ENCODE measurements at regions of chr4 and their contacts with region 1.

Region 1: GRCh38 chr4:140237606-140237986 is 83.6 kb upstream of the MAML3 start:
- DNase-seq: no peak
- ATAC-seq: no peak
- H3K4me3 Mint-ChIP-seq: no peak overlapping the region
- H3K27ac Mint-ChIP-seq: no peak overlapping the region
- H3K4me1 Mint-ChIP-seq: peaks cover 62% of the 10 kb centered on the region
- H3K27me3 Mint-ChIP-seq: peaks cover 20% of the 10 kb centered on the region
- CTCF ChIP-seq: no peak

Region 2: DNA sequence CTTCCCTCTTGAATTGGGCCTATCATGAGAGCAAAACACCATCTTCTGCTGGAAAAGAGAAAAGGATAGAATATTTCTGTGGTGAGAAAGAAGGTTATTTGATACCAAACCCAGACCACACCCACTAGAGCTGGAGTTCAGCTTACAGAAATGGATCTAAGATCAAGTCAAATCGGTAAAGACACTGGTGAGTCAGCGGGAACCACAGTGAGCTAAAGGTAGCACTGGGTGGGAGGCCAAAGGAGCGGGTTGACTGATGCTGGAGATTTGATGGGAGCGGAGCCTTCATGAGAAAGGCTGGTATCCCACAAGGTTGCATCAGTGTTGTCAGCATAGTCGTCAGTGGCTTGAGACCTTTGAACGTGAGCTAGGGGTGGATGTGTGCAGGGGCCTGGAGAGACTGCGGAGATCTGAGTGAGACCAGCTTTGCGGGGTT is 29.4 kb after region 1 on chr4:
- CTCF ChIA-PET with region 1: no interaction called
- POLR2A ChIA-PET with region 1: no interaction called
- intact Hi-C with region 1: loop called (anchors 1 kb)
- DNase-seq: no peak
- ATAC-seq: no peak
- H3K4me3 Mint-ChIP-seq: no peak overlapping the region
- H3K27ac Mint-ChIP-seq: no peak overlapping the region
- H3K4me1 Mint-ChIP-seq: peaks cover 8% of the 10 kb centered on the region
- H3K27me3 Mint-ChIP-seq: peaks cover 9% of the 10 kb centered on the region
- CTCF ChIP-seq: no peak